IMR-90 (cell line): ENCODE measurements at regions of chr14 and their contacts with region 1.

Region 1: GRCh38 chr14:53501361-53502211 is 348.5 kb upstream of the DDHD1 start:
- DNase-seq: peak; percentile 93
- ATAC-seq: peak; percentile 93
- H3K4me3 ChIP-seq: no peak overlapping the region
- H3K27ac ChIP-seq: peak overlapping the region; percentile 98
- H3K4me1 ChIP-seq: peaks cover 8% of the 10 kb centered on the region
- H3K27me3 ChIP-seq: no peaks in the 10 kb centered on the region
- CTCF ChIP-seq: no peak
- POLR2A ChIP-seq: no peak
- RAD21 ChIP-seq: no peak

Region 2: GRCh38 chr14:51957950-51958349 is 1543.6 kb before region 1 on chr14:
- CTCF ChIA-PET with region 1: no interaction called
- POLR2A ChIA-PET with region 1: no interaction called
- dilution Hi-C with region 1: no loop called
- in situ Hi-C with region 1: no loop called
- intact Hi-C with region 1: no loop called
- DNase-seq: peak; percentile 45
- ATAC-seq: no peak
- H3K4me3 ChIP-seq: no peak overlapping the region
- H3K27ac ChIP-seq: no peak overlapping the region
- H3K4me1 ChIP-seq: peaks cover 5% of the 10 kb centered on the region; the same call in 1 of the 2 replicates
- H3K27me3 ChIP-seq: no peaks in the 10 kb centered on the region
- CTCF ChIP-seq: no peak
- POLR2A ChIP-seq: no peak
- RAD21 ChIP-seq: no peak

Region 3: DNA sequence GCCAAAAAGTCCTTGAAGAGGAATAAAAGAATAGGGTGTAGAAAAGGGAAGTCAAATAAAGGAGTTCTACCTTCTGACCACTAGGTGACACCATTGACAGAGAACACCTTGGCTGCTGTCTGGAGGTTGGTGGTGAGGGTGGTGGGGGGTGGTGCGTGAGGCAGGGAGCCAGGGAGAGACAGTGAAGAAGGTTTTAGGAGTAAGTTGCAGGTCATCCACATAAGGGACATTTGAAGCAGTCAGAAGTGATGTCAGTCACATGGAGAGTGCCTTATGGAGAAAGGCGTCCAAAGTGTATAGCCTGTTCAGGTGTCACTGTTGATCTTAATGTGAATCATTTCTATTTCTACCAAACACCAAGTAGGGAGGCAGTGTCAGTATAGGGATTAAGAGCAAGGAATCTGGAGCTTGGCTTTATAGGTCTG is 69.2 kb before region 1 on chr14:
- CTCF ChIA-PET with region 1: no interaction called
- POLR2A ChIA-PET with region 1: no interaction called
- dilution Hi-C with region 1: no loop called
- in situ Hi-C with region 1: no loop called
- intact Hi-C with region 1: loop called (anchors 5 kb)
- DNase-seq: peak; percentile 60
- ATAC-seq: peak; percentile 94
- H3K4me3 ChIP-seq: no peak overlapping the region
- H3K27ac ChIP-seq: peak overlapping the region; percentile 3; the same call in 1 of the 2 replicates
- H3K4me1 ChIP-seq: peaks cover 6% of the 10 kb centered on the region
- H3K27me3 ChIP-seq: no peaks in the 10 kb centered on the region
- CTCF ChIP-seq: peak; percentile 71
- POLR2A ChIP-seq: no peak
- RAD21 ChIP-seq: peak; percentile 83

Region 4: GRCh38 chr14:53462931-53463778 is 38.4 kb before region 1 on chr14:
- CTCF ChIA-PET with region 1: interaction called, 3 read pairs
- POLR2A ChIA-PET with region 1: no interaction called
- dilution Hi-C with region 1: no loop called
- in situ Hi-C with region 1: no loop called
- intact Hi-C with region 1: loop called (anchors 5 kb)
- DNase-seq: no peak
- ATAC-seq: no peak
- H3K4me3 ChIP-seq: no peak overlapping the region
- H3K27ac ChIP-seq: peak overlapping the region; percentile 39; the same call in 1 of the 2 replicates
- H3K4me1 ChIP-seq: peaks cover 15% of the 10 kb centered on the region
- H3K27me3 ChIP-seq: no peaks in the 10 kb centered on the region
- CTCF ChIP-seq: no peak
- POLR2A ChIP-seq: no peak
- RAD21 ChIP-seq: no peak

Region 5: DNA sequence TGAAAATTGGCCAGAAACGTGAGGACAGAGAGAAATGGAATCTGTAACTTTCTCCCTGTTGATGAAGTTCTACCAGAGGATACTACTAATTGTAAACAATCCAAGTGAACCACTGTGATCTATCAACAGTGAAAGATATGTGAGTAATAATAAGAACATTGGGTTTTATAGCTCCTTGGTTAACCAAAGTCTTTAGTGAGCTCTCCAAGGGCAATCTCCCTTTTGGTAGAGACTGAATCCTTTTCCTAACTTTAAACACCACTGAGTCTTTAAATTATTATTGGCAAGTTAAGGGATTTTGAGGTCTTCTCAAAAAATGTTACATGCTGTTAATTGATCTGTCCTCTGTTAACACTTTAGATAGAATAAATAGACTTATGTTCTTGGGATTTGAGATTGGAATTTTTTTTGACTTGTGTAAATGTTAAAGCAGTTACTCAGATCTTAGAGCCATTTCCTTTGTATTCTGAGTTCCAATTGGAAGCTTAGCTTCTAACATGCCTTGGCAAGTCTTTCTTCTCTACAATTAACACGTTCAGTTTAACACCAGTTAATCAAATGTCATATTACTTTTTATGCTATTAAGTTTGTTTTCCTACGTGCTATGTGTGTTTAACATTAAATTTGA is 10.2 kb before region 1 on chr14:
- CTCF ChIA-PET with region 1: no interaction called
- POLR2A ChIA-PET with region 1: interaction called, 12 read pairs
- dilution Hi-C with region 1: no loop called
- in situ Hi-C with region 1: no loop called
- intact Hi-C with region 1: no loop called
- DNase-seq: peak; percentile 28
- ATAC-seq: peak; percentile 40
- H3K4me3 ChIP-seq: no peak overlapping the region
- H3K27ac ChIP-seq: peak overlapping the region; percentile 63; the same call in 1 of the 2 replicates
- H3K4me1 ChIP-seq: peaks cover 5% of the 10 kb centered on the region
- H3K27me3 ChIP-seq: no peaks in the 10 kb centered on the region
- CTCF ChIP-seq: no peak
- POLR2A ChIP-seq: no peak
- RAD21 ChIP-seq: no peak